ENCODE measurements at regions of chr2 and their contacts with region 1.

Region 1: GRCh38 chr2:64609227-64609941 is 44.3 kb downstream of the SERTAD2 start:
- DNase-seq: peak; percentile 89
- ATAC-seq: peak; percentile 94
- H3K4me3 ChIP-seq: peak overlapping the region; percentile 58
- H3K27ac ChIP-seq: peak overlapping the region; percentile 85
- H3K4me1 ChIP-seq: peaks cover 11% of the 10 kb centered on the region
- H3K27me3 ChIP-seq: no peaks in the 10 kb centered on the region
- CTCF ChIP-seq: no peak

Region 2: DNA sequence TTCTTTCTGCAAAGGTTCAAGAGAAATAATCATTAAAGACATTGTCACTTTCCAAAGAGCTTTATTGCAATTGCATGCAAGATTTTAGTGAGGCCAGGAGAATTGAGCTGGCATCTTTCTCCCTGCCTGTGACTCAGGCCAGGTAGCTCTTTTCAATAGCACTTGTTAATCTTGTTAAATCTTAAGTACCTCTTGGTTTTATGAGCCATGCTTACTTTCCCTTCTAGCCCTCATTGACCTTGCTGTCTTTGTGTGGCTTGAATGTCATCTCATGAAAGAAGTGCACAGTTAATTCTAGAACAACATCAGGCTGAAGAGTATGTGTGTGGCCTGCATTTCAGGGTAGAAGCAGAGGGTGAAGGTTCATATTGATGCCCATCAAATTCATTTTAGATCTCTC is 170.2 kb before region 1 on chr2:
- intact Hi-C with region 1: no loop called
- DNase-seq: no peak
- ATAC-seq: peak; percentile 91
- H3K4me3 ChIP-seq: no peak overlapping the region
- H3K27ac ChIP-seq: no peak overlapping the region
- H3K4me1 ChIP-seq: no peaks in the 10 kb centered on the region
- H3K27me3 ChIP-seq: no peaks in the 10 kb centered on the region
- CTCF ChIP-seq: no peak

Region 3: GRCh38 chr2:64888591-64889309 is 279.4 kb after region 1 on chr2:
- intact Hi-C with region 1: no loop called
- DNase-seq: no peak
- ATAC-seq: peak; percentile 77
- H3K4me3 ChIP-seq: no peak overlapping the region
- H3K27ac ChIP-seq: no peak overlapping the region
- H3K4me1 ChIP-seq: no peaks in the 10 kb centered on the region
- H3K27me3 ChIP-seq: no peaks in the 10 kb centered on the region
- CTCF ChIP-seq: no peak

Region 4: DNA sequence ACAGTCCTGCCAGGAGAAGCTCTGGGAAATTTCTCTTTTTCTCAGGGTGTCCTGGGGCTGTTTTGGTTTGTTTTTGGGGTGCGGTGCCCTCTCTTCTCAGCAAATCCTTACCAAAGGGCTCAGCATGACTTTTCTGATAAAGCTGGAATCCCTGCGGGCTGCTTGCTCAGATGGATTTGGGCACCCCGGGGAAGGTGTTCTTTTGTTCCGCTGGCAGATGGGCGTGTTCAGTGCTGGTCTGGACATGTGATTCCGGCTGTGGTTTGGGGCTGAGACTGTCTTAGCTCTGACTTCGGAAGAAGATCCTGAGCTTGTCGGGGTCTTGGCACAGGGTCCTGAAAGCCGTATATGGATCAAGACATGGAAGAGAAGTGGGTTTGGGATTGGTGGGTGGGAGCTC is 957.2 kb after region 1 on chr2:
- intact Hi-C with region 1: loop called (anchors 10 kb)
- DNase-seq: no peak
- ATAC-seq: peak; percentile 31
- H3K4me3 ChIP-seq: no peak overlapping the region
- H3K27ac ChIP-seq: no peak overlapping the region
- H3K4me1 ChIP-seq: no peaks in the 10 kb centered on the region
- H3K27me3 ChIP-seq: no peaks in the 10 kb centered on the region
- CTCF ChIP-seq: no peak